ENCODE measurements at regions of chr1 and their contacts with region 1.

Region 1: GRCh38 chr1:231936983-231937775 is 310.6 kb downstream of the DISC1 start:
- DNase-seq: no peak
- H3K4me3 ChIP-seq: no peak overlapping the region
- H3K27ac ChIP-seq: no peak overlapping the region
- H3K4me1 ChIP-seq: peaks cover 2 to 31% (median 9%) of the 10 kb centered on the region in 4 donors
- H3K27me3 ChIP-seq: no peaks in the 10 kb centered on the region
- CTCF ChIP-seq: no peak
- EP300 ChIP-seq: no peak
- POLR2A ChIP-seq: no peak

Region 2: DNA sequence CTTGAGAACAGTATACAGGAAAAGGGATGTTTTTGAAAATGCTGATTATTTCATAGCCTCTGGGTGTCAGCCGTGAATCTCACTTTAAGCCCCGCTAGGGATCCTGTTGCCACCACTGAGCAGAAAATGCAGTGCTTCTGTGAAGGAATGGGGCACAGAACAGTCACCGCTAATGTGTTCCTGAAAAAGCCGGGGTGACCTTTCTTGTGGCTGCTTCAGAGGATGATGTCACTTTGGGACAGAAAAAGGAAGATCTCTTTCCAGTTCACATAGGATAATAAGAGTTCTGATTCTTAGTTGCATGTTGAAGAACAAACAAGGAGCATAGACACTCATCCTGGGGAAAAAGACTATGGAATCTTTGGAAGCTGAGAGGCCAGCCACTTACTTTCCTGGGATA is 39.1 kb after region 1 on chr1:
- in situ Hi-C with region 1: no loop called
- intact Hi-C with region 1: loop called (anchors 1 kb)
- DNase-seq: no peak
- H3K4me3 ChIP-seq: no peak overlapping the region
- H3K27ac ChIP-seq: no peak overlapping the region
- H3K4me1 ChIP-seq: no peaks in the 10 kb centered on the region
- H3K27me3 ChIP-seq: no peaks in the 10 kb centered on the region
- CTCF ChIP-seq: no peak
- EP300 ChIP-seq: no peak
- POLR2A ChIP-seq: no peak